Esophagus squamous epithelium (tissue), 5 donors: ENCODE measurements at regions of chr6 and their contacts with region 1.

Region 1: GRCh38 chr6:33700391-33701050 is 11.0 kb downstream of the UQCC2 start:
- DNase-seq: no peak
- H3K4me3 ChIP-seq: no peak overlapping the region
- H3K27ac ChIP-seq: peak overlapping the region; percentile 35 to 74 (median 56)
- H3K4me1 ChIP-seq: peaks cover 20 to 56% (median 48%) of the 10 kb centered on the region in 3 donors
- H3K27me3 ChIP-seq: no peaks in the 10 kb centered on the region
- CTCF ChIP-seq: peak in 5 of 6 experiments; percentile 67 to 88 (median 76)
- POLR2A ChIP-seq: no peak

Region 2: GRCh38 chr6:33585403-33586107 is 115.0 kb before region 1 on chr6:
- intact Hi-C with region 1: loop called (anchors 5 kb)
- DNase-seq: no peak
- H3K4me3 ChIP-seq: peak overlapping the region in 1 of 4 donors; percentile 43
- H3K27ac ChIP-seq: peak overlapping the region in 1 of 4 donors; percentile 21
- H3K4me1 ChIP-seq: peaks cover 18 to 34% (median 26%) of the 10 kb centered on the region in 3 donors
- H3K27me3 ChIP-seq: no peaks in the 10 kb centered on the region
- CTCF ChIP-seq: peak; percentile 95 to 100 (median 98)
- POLR2A ChIP-seq: peak in 1 of 4 donors; percentile 7